MCF 10A (cell line): ENCODE measurements at regions of chr5 and their contacts with region 1.

Region 1: DNA sequence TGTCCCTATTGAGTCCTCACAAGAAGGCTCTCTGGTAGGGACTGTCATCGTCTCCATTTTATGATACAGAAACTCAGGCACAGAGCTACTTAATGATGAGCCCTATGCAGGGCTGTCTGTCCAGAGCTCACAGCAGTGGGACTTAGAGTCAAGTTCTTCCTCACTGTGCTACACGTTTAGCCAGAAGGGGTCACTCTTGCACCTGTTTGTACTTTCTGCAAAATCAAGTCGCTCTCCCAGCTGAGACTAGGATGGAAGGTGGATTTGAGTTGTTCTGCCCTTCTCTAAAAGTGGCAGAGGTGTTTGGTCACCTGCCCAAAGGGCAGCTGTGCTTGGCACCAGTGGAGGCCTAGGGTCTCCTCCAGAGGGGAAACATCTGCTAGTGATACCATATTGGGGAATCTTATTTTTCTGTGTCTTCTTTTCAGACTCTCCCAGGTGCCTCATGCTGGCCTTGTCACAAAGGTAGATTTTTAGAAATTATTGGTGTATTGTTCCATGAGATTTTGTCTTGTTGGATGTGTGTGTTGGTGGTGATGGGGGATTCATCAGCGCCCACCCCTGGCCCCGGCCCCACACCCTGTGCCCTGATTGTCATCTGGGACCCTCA is 104.2 kb downstream of the PPARGC1B start:
- DNase-seq: peak; percentile 87
- H3K4me3 Mint-ChIP-seq: no peak overlapping the region
- H3K27ac Mint-ChIP-seq: peak overlapping the region; percentile 42
- H3K4me1 Mint-ChIP-seq: peaks cover 17% of the 10 kb centered on the region
- H3K27me3 Mint-ChIP-seq: no peaks in the 10 kb centered on the region
- CTCF ChIP-seq: peak; percentile 92

Region 2: GRCh38 chr5:149392718-149393117 is 441.6 kb before region 1 on chr5:
- CTCF ChIA-PET with region 1: no interaction called
- POLR2A ChIA-PET with region 1: no interaction called
- intact Hi-C with region 1: no loop called
- DNase-seq: peak; percentile 66
- H3K4me3 Mint-ChIP-seq: no peak overlapping the region
- H3K27ac Mint-ChIP-seq: no peak overlapping the region
- H3K4me1 Mint-ChIP-seq: no peaks in the 10 kb centered on the region
- H3K27me3 Mint-ChIP-seq: no peaks in the 10 kb centered on the region
- CTCF ChIP-seq: no peak

Region 3: DNA sequence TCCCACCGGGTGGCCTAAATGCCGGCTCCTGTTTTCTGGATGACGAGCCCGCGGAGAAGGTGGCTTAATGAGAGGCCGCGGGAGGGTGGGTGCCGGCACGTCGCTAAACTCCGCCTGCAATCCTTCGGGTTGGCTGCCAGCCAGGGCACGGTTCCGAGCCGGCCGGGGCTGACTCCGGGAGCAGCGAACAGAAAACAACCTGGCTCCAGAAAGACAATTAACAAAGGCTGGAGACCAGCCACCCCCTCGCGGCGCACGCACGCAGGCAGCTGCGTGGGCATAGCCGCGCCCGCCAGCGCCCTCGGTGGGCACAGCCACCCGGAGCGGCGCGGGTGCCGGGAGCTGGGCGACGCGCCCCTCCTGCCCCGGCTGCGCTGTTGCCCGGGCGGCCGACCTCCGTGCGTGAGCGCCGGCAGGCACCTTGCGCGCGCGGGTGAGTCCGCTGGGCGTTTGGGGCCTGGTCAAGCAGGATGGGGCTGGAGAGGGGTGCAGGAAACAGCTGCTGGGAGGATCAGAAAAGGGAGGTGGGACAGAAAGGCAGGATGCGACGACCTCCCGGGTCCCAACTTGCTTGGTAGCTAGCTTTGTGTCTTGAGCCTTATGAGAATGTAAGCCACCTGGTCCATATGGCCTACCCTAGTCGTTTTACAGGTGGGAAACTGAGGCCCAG is 253.0 kb before region 1 on chr5 and contains the start of gene ARHGEF37:
- CTCF ChIA-PET with region 1: no interaction called
- POLR2A ChIA-PET with region 1: no interaction called
- intact Hi-C with region 1: no loop called
- DNase-seq: peak; percentile 83
- H3K4me3 Mint-ChIP-seq: peak within 1 kb of the TSS; percentile 75
- H3K27ac Mint-ChIP-seq: peak within 1 kb of the TSS; percentile 76
- H3K4me1 Mint-ChIP-seq: peaks cover 26% of the 10 kb centered on the region
- H3K27me3 Mint-ChIP-seq: no peaks in the 10 kb centered on the region
- CTCF ChIP-seq: no peak
- total RNA-seq, gene ARHGEF37: 3.9 and 5.1 TPM in 2 replicates

Region 4: GRCh38 chr5:149656576-149657182 is 177.7 kb before region 1 on chr5:
- CTCF ChIA-PET with region 1: interaction called, 10 read pairs
- POLR2A ChIA-PET with region 1: no interaction called
- intact Hi-C with region 1: no loop called
- DNase-seq: peak; percentile 80
- H3K4me3 Mint-ChIP-seq: no peak overlapping the region
- H3K27ac Mint-ChIP-seq: no peak overlapping the region
- H3K4me1 Mint-ChIP-seq: no peaks in the 10 kb centered on the region
- H3K27me3 Mint-ChIP-seq: peaks cover 21% of the 10 kb centered on the region
- CTCF ChIP-seq: peak; percentile 85

Region 5: GRCh38 chr5:149852641-149853330 is 18.4 kb after region 1 on chr5:
- CTCF ChIA-PET with region 1: interaction called, 845 read pairs
- POLR2A ChIA-PET with region 1: interaction called, 29 read pairs
- intact Hi-C with region 1: loop called (anchors 1 kb)
- DNase-seq: peak; percentile 91
- H3K4me3 Mint-ChIP-seq: no peak overlapping the region
- H3K27ac Mint-ChIP-seq: peak overlapping the region; percentile 16
- H3K4me1 Mint-ChIP-seq: peaks cover 17% of the 10 kb centered on the region
- H3K27me3 Mint-ChIP-seq: no peaks in the 10 kb centered on the region
- CTCF ChIP-seq: peak; percentile 87

Region 6: GRCh38 chr5:149902177-149902576 is 67.8 kb after region 1 on chr5:
- CTCF ChIA-PET with region 1: interaction called, 5 read pairs
- POLR2A ChIA-PET with region 1: interaction called, 11 read pairs
- intact Hi-C with region 1: loop called (anchors 1 kb)
- DNase-seq: peak; percentile 49
- H3K4me3 Mint-ChIP-seq: no peak overlapping the region
- H3K27ac Mint-ChIP-seq: peak overlapping the region; percentile 34
- H3K4me1 Mint-ChIP-seq: peaks cover 23% of the 10 kb centered on the region
- H3K27me3 Mint-ChIP-seq: no peaks in the 10 kb centered on the region
- CTCF ChIP-seq: peak; percentile 13

Region 7: GRCh38 chr5:149938791-149939358 is 104.5 kb after region 1 on chr5:
- CTCF ChIA-PET with region 1: interaction called, 1,621 read pairs
- POLR2A ChIA-PET with region 1: interaction called, 14 read pairs
- intact Hi-C with region 1: no loop called
- DNase-seq: peak; percentile 100
- H3K4me3 Mint-ChIP-seq: peak overlapping the region; percentile 55
- H3K27ac Mint-ChIP-seq: peak overlapping the region; percentile 98
- H3K4me1 Mint-ChIP-seq: peaks cover 77% of the 10 kb centered on the region
- H3K27me3 Mint-ChIP-seq: no peaks in the 10 kb centered on the region
- CTCF ChIP-seq: no peak

Region 8: GRCh38 chr5:150000256-150000989 is 166.1 kb after region 1 on chr5 and contains the starts of genes HMGXB3 and TIGD6:
- CTCF ChIA-PET with region 1: interaction called, 195 read pairs
- POLR2A ChIA-PET with region 1: interaction called, 7 read pairs
- intact Hi-C with region 1: no loop called
- DNase-seq: peak; percentile 92
- H3K4me3 Mint-ChIP-seq: peak within 1 kb of the TSS; percentile 82
- H3K27ac Mint-ChIP-seq: peak within 1 kb of the TSS; percentile 95
- H3K4me1 Mint-ChIP-seq: peaks cover 43% of the 10 kb centered on the region
- H3K27me3 Mint-ChIP-seq: no peaks in the 10 kb centered on the region
- CTCF ChIP-seq: no peak
- total RNA-seq, gene HMGXB3: 66.8 and 67.8 TPM in 2 replicates
- total RNA-seq, gene TIGD6: 9.0 and 10.6 TPM in 2 replicates

Region 9: GRCh38 chr5:150217873-150218692 is 383.7 kb after region 1 on chr5:
- CTCF ChIA-PET with region 1: interaction called, 4 read pairs
- POLR2A ChIA-PET with region 1: no interaction called
- intact Hi-C with region 1: loop called (anchors 1 kb)
- DNase-seq: peak; percentile 93
- H3K4me3 Mint-ChIP-seq: no peak overlapping the region
- H3K27ac Mint-ChIP-seq: no peak overlapping the region
- H3K4me1 Mint-ChIP-seq: no peaks in the 10 kb centered on the region
- H3K27me3 Mint-ChIP-seq: no peaks in the 10 kb centered on the region
- CTCF ChIP-seq: peak; percentile 98